ENCODE measurements at regions of chr18 and their contacts with region 1.

Region 1: GRCh38 chr18:34787931-34788532 is 77.9 kb downstream of the DTNA start:
- DNase-seq: peak; percentile 61
- H3K4me3 Mint-ChIP-seq: no peak overlapping the region
- H3K27ac Mint-ChIP-seq: no peak overlapping the region
- H3K4me1 Mint-ChIP-seq: peaks cover 12% of the 10 kb centered on the region
- H3K27me3 Mint-ChIP-seq: peaks cover 18% of the 10 kb centered on the region

Region 2: DNA sequence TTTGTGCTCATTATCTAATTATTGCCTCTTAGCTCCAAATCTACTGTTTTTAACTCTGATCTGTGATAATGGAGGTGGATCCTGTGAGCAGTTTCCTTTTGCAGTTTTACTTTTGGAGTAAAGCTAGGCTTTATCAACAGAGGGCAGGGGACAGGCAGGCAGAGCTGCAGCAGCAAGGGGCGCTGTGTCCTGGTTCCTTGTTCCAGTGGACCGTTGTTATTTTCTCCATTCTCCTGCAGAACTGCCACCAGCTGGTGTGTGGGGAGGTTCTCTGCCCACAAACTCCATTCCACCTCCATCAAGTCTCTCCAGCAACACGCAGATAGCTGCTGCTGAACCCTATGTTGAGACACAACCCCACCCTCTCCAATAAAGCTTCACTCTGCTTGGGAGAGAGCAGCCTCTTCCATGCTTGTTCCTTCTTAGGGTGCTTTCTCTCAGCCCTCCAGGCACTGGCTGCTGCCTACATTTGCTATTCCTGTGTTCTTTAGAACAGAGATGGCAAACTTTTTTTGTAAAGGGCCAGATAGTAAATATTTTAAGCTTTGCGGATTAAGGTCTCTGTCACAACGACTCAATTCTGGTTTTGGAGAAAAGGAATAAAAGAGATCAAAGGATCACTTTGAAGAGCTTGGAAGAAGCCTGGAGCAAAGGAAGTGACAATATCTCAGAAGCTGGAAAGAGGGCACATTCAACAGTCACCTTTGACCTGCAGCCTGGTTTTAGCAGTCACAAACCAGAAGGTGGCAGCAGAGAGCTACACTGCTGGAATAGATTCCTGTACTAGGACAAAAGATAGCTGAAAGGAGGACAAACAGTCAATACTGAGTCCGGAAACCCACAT is 1556.3 kb before region 1 on chr18:
- CTCF ChIA-PET with region 1: interaction called, 3 read pairs
- intact Hi-C with region 1: loop called (anchors 1 kb)
- DNase-seq: peak; percentile 76
- H3K4me3 Mint-ChIP-seq: no peak overlapping the region
- H3K27ac Mint-ChIP-seq: no peak overlapping the region
- H3K4me1 Mint-ChIP-seq: peaks cover 4% of the 10 kb centered on the region
- H3K27me3 Mint-ChIP-seq: no peaks in the 10 kb centered on the region

Region 3: GRCh38 chr18:33839441-33840211 is 948.4 kb before region 1 on chr18:
- CTCF ChIA-PET with region 1: no interaction called
- intact Hi-C with region 1: loop called (anchors 5 kb)
- DNase-seq: no peak
- H3K4me3 Mint-ChIP-seq: no peak overlapping the region
- H3K27ac Mint-ChIP-seq: no peak overlapping the region
- H3K4me1 Mint-ChIP-seq: no peaks in the 10 kb centered on the region
- H3K27me3 Mint-ChIP-seq: no peaks in the 10 kb centered on the region

Region 4: DNA sequence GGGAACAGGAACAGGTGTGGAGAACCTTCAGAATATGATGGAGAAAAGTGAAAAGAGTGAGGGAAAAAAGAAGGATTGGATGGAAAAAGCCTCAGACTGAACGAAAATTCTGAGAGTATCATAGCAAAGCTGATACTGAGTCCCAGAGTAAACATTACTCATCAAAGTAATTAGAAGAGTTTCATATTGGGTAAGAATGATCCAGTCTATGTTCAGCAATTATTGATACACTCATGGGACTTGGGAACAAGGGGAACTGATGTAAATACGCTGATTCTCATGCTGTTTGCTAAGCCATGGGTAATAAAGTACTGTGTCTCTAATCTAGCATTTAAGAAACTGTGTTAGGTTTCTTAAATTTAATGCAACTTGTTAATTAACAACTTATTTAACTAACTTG is 343.4 kb before region 1 on chr18:
- CTCF ChIA-PET with region 1: no interaction called
- intact Hi-C with region 1: no loop called
- DNase-seq: no peak
- H3K4me3 Mint-ChIP-seq: no peak overlapping the region
- H3K27ac Mint-ChIP-seq: no peak overlapping the region
- H3K4me1 Mint-ChIP-seq: no peaks in the 10 kb centered on the region
- H3K27me3 Mint-ChIP-seq: no peaks in the 10 kb centered on the region

Region 5: GRCh38 chr18:34595673-34596303 is 192.2 kb before region 1 on chr18:
- CTCF ChIA-PET with region 1: no interaction called
- intact Hi-C with region 1: loop called (anchors 5 kb)
- DNase-seq: no peak
- H3K4me3 Mint-ChIP-seq: no peak overlapping the region
- H3K27ac Mint-ChIP-seq: no peak overlapping the region
- H3K4me1 Mint-ChIP-seq: no peaks in the 10 kb centered on the region
- H3K27me3 Mint-ChIP-seq: no peaks in the 10 kb centered on the region

Region 6: DNA sequence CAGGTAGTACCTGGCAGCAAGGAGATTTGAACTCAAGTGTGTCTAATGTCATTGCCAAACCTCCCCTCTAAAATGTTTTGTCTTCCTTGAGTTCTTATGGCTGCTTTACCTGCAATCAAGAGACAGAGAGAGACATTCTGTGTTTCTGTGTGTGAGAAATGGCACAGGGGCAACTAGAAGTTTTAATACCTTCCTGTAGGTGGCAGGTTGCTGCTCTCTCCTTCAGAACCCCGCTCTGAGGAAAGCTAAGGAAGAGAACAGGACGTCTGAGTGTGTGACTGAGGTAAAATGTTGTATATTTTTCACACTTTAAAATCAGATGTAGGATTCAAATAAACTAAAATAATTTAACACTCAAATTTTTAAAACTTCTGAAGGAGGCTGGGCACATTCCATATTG is 58.8 kb before region 1 on chr18:
- CTCF ChIA-PET with region 1: interaction called, 3 read pairs
- intact Hi-C with region 1: loop called (anchors 1 kb)
- DNase-seq: peak; percentile 9
- H3K4me3 Mint-ChIP-seq: no peak overlapping the region
- H3K27ac Mint-ChIP-seq: no peak overlapping the region
- H3K4me1 Mint-ChIP-seq: peaks cover 3% of the 10 kb centered on the region
- H3K27me3 Mint-ChIP-seq: peaks cover 10% of the 10 kb centered on the region

Region 7: DNA sequence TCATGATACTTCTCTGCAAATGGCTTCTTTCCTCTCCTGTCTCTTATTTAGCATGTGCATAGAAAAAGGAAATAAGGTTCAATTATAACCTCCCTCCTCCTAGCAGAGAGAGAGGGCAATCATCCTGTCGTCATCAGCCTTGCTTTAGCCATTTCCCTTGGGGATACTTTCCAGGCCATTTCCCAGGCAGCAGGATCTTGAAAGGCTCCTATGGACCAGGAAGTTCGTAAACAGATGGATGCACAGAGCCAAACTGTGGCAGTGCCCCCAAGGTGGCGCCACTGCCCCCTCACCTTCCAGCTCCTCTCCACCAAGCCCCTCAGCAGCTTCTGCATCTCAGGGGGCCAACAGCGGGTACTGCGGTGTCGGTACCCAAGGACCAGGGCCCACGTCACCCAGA is 79.5 kb after region 1 on chr18:
- CTCF ChIA-PET with region 1: no interaction called
- intact Hi-C with region 1: loop called (anchors 2 kb)
- DNase-seq: no peak
- H3K4me3 Mint-ChIP-seq: no peak overlapping the region
- H3K27ac Mint-ChIP-seq: peak overlapping the region; percentile 53
- H3K4me1 Mint-ChIP-seq: peaks cover 51% of the 10 kb centered on the region
- H3K27me3 Mint-ChIP-seq: no peaks in the 10 kb centered on the region

Measured in activated naive CD4-positive, alpha-beta T cell treated with anti-CD3 and anti-CD28 coated beads for 36 hours (primary cell).